ENCODE measurements at regions of chr22 and their contacts with region 1.

Region 1: DNA sequence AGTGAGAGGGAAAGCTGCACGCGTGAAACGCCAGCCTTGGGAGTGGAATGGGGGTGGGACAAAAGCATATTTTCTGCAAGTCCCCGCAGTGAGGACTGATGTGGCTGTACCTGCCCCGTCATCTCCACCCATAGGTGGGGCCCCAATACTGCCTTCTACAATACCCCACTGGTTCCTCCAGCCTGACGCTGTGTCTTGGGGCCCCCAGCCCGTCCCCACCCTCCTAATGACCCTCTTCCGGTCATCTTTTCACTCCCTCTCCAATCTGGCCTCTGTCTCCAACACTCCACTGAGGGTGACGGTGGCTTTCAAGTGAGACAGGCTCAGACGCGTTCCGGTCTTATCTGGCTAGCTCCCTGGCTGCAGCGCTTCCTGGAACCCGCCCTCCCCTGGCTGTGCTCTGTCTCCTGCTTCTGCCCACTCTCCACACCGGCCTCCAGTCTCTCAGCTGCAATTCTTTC is 104.2 kb downstream of the MICAL3 start:
- DNase-seq: peak; percentile 54
- ATAC-seq: peak; percentile 47
- H3K4me3 ChIP-seq: no peak overlapping the region
- H3K4me3 Mint-ChIP-seq: peak overlapping the region; percentile 62
- H3K27ac ChIP-seq: peak overlapping the region in 1 of 2 donors; percentile 78
- H3K27ac Mint-ChIP-seq: peak overlapping the region; percentile 78
- H3K4me1 ChIP-seq: peaks cover 85 to 95% of the 10 kb centered on the region in 2 donors
- H3K4me1 Mint-ChIP-seq: peaks cover 5% of the 10 kb centered on the region
- H3K27me3 ChIP-seq: no peaks in the 10 kb centered on the region
- H3K27me3 Mint-ChIP-seq: no peaks in the 10 kb centered on the region
- CTCF ChIP-seq: peak; percentile 35

Region 2: GRCh38 chr22:17587629-17588028 is 332.5 kb before region 1 on chr22:
- CTCF ChIA-PET with region 1: no interaction called
- POLR2A ChIA-PET with region 1: no interaction called
- intact Hi-C with region 1: no loop called
- DNase-seq: no peak
- ATAC-seq: no peak
- H3K4me3 ChIP-seq: no peak overlapping the region
- H3K4me3 Mint-ChIP-seq: no peak overlapping the region
- H3K27ac ChIP-seq: no peak overlapping the region
- H3K27ac Mint-ChIP-seq: no peak overlapping the region
- H3K4me1 ChIP-seq: no peaks in the 10 kb centered on the region
- H3K4me1 Mint-ChIP-seq: no peaks in the 10 kb centered on the region
- H3K27me3 ChIP-seq: no peaks in the 10 kb centered on the region
- H3K27me3 Mint-ChIP-seq: no peaks in the 10 kb centered on the region
- CTCF ChIP-seq: no peak

Region 3: GRCh38 chr22:17988800-17989513 is 68.8 kb after region 1 on chr22:
- CTCF ChIA-PET with region 1: no interaction called
- POLR2A ChIA-PET with region 1: no interaction called
- intact Hi-C with region 1: loop called (anchors 2 kb)
- DNase-seq: no peak
- ATAC-seq: no peak
- H3K4me3 ChIP-seq: no peak overlapping the region
- H3K4me3 Mint-ChIP-seq: peak overlapping the region; percentile 5
- H3K27ac ChIP-seq: peak overlapping the region in 1 of 2 donors; percentile 69
- H3K27ac Mint-ChIP-seq: peak overlapping the region; percentile 83
- H3K4me1 ChIP-seq: peaks cover 80 to 93% of the 10 kb centered on the region in 2 donors
- H3K4me1 Mint-ChIP-seq: peaks cover 94% of the 10 kb centered on the region
- H3K27me3 ChIP-seq: no peaks in the 10 kb centered on the region
- H3K27me3 Mint-ChIP-seq: no peaks in the 10 kb centered on the region
- CTCF ChIP-seq: no peak

Region 4: GRCh38 chr22:18731075-18731666 is 811.0 kb after region 1 on chr22:
- CTCF ChIA-PET with region 1: no interaction called
- POLR2A ChIA-PET with region 1: no interaction called
- intact Hi-C with region 1: no loop called
- DNase-seq: no peak
- ATAC-seq: no peak
- H3K4me3 ChIP-seq: no peak overlapping the region
- H3K4me3 Mint-ChIP-seq: no peak overlapping the region
- H3K27ac ChIP-seq: no peak overlapping the region
- H3K27ac Mint-ChIP-seq: no peak overlapping the region
- H3K4me1 ChIP-seq: no peaks in the 10 kb centered on the region
- H3K4me1 Mint-ChIP-seq: no peaks in the 10 kb centered on the region
- H3K27me3 ChIP-seq: no peaks in the 10 kb centered on the region
- H3K27me3 Mint-ChIP-seq: no peaks in the 10 kb centered on the region
- CTCF ChIP-seq: no peak

Measured in B cell (primary cell).